IMR-90 (cell line): ENCODE measurements at regions of chr12 and their contacts with region 1.

Region 1: GRCh38 chr12:95336390-95337067 is 118.9 kb downstream of the VEZT start:
- DNase-seq: peak; percentile 85
- ATAC-seq: peak; percentile 78
- H3K4me3 ChIP-seq: peak overlapping the region; percentile 24; the same call in 1 of the 2 replicates
- H3K27ac ChIP-seq: peak overlapping the region; percentile 60
- H3K4me1 ChIP-seq: peaks cover 8% of the 10 kb centered on the region
- H3K27me3 ChIP-seq: no peaks in the 10 kb centered on the region
- CTCF ChIP-seq: peak; percentile 97
- POLR2A ChIP-seq: 0 out of 2 replicates have a peak, but pooled peaks have one; percentile 42
- RAD21 ChIP-seq: peak; percentile 94

Region 2: GRCh38 chr12:94133964-94134795 is 1202.3 kb before region 1 on chr12:
- CTCF ChIA-PET with region 1: no interaction called
- POLR2A ChIA-PET with region 1: no interaction called
- dilution Hi-C with region 1: no loop called
- in situ Hi-C with region 1: loop called (anchors 25 kb)
- intact Hi-C with region 1: no loop called
- DNase-seq: peak; percentile 62
- ATAC-seq: peak; percentile 87
- H3K4me3 ChIP-seq: no peak overlapping the region
- H3K27ac ChIP-seq: no peak overlapping the region
- H3K4me1 ChIP-seq: no peaks in the 10 kb centered on the region
- H3K27me3 ChIP-seq: peaks cover 20% of the 10 kb centered on the region
- CTCF ChIP-seq: peak; percentile 78
- POLR2A ChIP-seq: no peak
- RAD21 ChIP-seq: peak; percentile 81

Region 3: GRCh38 chr12:94545935-94546771 is 790.4 kb before region 1 on chr12:
- CTCF ChIA-PET with region 1: interaction called, 5 read pairs
- POLR2A ChIA-PET with region 1: no interaction called
- dilution Hi-C with region 1: no loop called
- in situ Hi-C with region 1: loop called (anchors 10 kb)
- intact Hi-C with region 1: loop called (anchors 1 kb)
- DNase-seq: peak; percentile 68
- ATAC-seq: peak; percentile 98
- H3K4me3 ChIP-seq: no peak overlapping the region
- H3K27ac ChIP-seq: no peak overlapping the region
- H3K4me1 ChIP-seq: no peaks in the 10 kb centered on the region
- H3K27me3 ChIP-seq: peaks cover 8% of the 10 kb centered on the region
- CTCF ChIP-seq: peak; percentile 76
- POLR2A ChIP-seq: no peak
- RAD21 ChIP-seq: peak; percentile 89

Region 4: GRCh38 chr12:94710933-94711332 is 625.6 kb before region 1 on chr12:
- CTCF ChIA-PET with region 1: no interaction called
- POLR2A ChIA-PET with region 1: no interaction called
- dilution Hi-C with region 1: no loop called
- in situ Hi-C with region 1: no loop called
- intact Hi-C with region 1: loop called (anchors 1 kb)
- DNase-seq: peak; percentile 4
- ATAC-seq: peak; percentile 49; the same call in 1 of the 2 replicates
- H3K4me3 ChIP-seq: no peak overlapping the region
- H3K27ac ChIP-seq: no peak overlapping the region
- H3K4me1 ChIP-seq: no peaks in the 10 kb centered on the region
- H3K27me3 ChIP-seq: peaks cover 38% of the 10 kb centered on the region
- CTCF ChIP-seq: peak; percentile 18; the same call in 1 of the 2 replicates
- POLR2A ChIP-seq: no peak
- RAD21 ChIP-seq: peak; percentile 31; the same call in 1 of the 2 replicates

Region 5: GRCh38 chr12:95072900-95073697 is 263.4 kb before region 1 on chr12 and contains the start of gene NR2C1:
- CTCF ChIA-PET with region 1: interaction called, 10 read pairs
- POLR2A ChIA-PET with region 1: no interaction called
- dilution Hi-C with region 1: no loop called
- in situ Hi-C with region 1: no loop called
- intact Hi-C with region 1: loop called (anchors 2 kb)
- DNase-seq: peak; percentile 92
- ATAC-seq: peak; percentile 95
- H3K4me3 ChIP-seq: peak within 1 kb of the TSS; percentile 98
- H3K27ac ChIP-seq: peak within 1 kb of the TSS; percentile 97
- H3K4me1 ChIP-seq: no peaks in the 10 kb centered on the region
- H3K27me3 ChIP-seq: no peaks in the 10 kb centered on the region
- CTCF ChIP-seq: no peak; the same call in 1 of the 2 replicates
- POLR2A ChIP-seq: peak; percentile 39; the same call in 1 of the 2 replicates
- RAD21 ChIP-seq: no peak; the same call in 1 of the 2 replicates
- total RNA-seq, gene NR2C1: 12.7 and 17.2 TPM in 2 replicates

Region 6: GRCh38 chr12:95217377-95218149 is 119.0 kb before region 1 on chr12 and contains the starts of genes FGD6 and VEZT:
- CTCF ChIA-PET with region 1: interaction called, 10 read pairs
- POLR2A ChIA-PET with region 1: no interaction called
- dilution Hi-C with region 1: no loop called
- in situ Hi-C with region 1: no loop called
- intact Hi-C with region 1: loop called (anchors 2 kb)
- DNase-seq: peak; percentile 99
- ATAC-seq: peak; percentile 93
- H3K4me3 ChIP-seq: peak within 1 kb of the TSS; percentile 81
- H3K27ac ChIP-seq: peak within 1 kb of the TSS; percentile 77
- H3K4me1 ChIP-seq: 0 out of 2 replicates have a peak, but pooled peaks cover 2% of the 10 kb centered on the region
- H3K27me3 ChIP-seq: no peaks in the 10 kb centered on the region
- CTCF ChIP-seq: peak; percentile 87
- POLR2A ChIP-seq: peak; percentile 76; the same call in 1 of the 2 replicates
- RAD21 ChIP-seq: peak; percentile 81
- total RNA-seq, gene FGD6: 9.5 and 9.7 TPM in 2 replicates
- total RNA-seq, gene VEZT: 83.6 and 90.2 TPM in 2 replicates

Region 7: DNA sequence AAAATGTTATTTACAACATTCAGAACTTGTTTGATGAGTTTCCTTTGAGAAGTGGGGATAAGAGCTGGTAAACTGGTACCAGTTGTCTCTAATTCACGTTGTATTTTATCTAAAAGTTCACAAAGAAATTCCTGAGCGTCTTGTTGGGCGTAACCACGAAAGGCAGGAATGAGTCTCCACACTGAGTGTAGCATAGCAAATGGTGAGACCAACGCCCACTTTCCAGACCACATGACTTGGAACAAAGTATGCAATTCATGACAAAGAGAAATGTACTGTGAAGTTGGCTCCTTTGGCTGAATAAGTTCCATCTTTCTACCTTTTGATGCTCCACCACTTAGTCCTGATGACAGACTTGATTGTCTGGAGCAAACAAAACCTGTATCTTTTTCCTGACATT is 196.3 kb after region 1 on chr12:
- CTCF ChIA-PET with region 1: interaction called, 11 read pairs
- POLR2A ChIA-PET with region 1: no interaction called
- dilution Hi-C with region 1: no loop called
- in situ Hi-C with region 1: no loop called
- intact Hi-C with region 1: loop called (anchors 1 kb)
- DNase-seq: peak; percentile 53
- ATAC-seq: no peak
- H3K4me3 ChIP-seq: no peak overlapping the region
- H3K27ac ChIP-seq: peak overlapping the region; percentile 55; the same call in 1 of the 2 replicates
- H3K4me1 ChIP-seq: peaks cover 15% of the 10 kb centered on the region
- H3K27me3 ChIP-seq: no peaks in the 10 kb centered on the region
- CTCF ChIP-seq: no peak
- POLR2A ChIP-seq: no peak
- RAD21 ChIP-seq: no peak